Vagina (tissue), 2 donors: ENCODE measurements at regions of chr11 and their contacts with region 1.

Region 1: DNA sequence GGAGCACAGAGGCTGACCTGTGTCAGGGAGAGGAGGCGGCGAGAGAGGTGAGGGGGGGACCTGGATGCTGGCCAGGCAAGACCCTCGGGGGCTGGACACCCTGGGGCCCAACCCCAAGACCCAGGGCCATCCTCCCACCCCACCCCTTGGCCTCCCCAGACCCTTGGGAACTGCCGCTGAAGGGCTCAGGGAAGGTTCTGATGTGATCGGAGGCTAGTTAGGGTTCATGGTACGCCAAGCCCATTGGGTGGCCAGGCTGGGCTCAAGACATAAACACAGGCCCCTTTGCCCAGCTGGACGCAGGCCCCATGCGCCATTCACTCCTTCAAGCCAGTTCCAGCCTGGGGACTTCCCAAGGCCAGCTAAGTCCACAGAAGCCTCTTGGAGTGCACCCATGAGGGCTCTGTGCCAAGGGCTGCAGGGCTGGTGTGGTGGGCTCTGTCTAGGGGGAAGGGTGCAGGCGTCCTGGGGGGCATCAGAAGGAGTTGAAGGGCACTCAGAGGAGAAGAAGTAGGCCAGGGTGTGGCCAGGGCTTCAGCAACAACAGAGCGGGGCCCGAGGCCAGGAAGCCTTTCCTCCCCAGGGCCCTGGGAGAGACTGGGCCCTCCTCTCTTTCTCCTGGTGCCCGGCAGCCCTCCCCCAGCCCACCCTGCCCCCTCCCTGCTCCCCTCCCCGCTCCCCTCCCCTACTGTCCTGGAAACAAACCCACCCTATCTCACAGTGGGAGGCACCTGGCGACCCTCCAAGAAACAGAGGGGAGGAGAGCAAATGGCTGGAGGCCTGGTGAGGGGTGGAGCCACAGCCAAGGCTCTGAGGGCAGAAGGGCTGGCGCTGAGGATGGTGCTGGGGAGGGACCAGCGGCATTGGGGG is 12.9 kb downstream of the TSPAN32 start:
- DNase-seq: no peak
- H3K4me3 ChIP-seq: no peak overlapping the region
- H3K27ac ChIP-seq: peak overlapping the region; percentile 97
- H3K4me1 ChIP-seq: peaks cover 59% of the 10 kb centered on the region
- H3K27me3 ChIP-seq: no peaks in the 10 kb centered on the region
- CTCF ChIP-seq: no peak
- POLR2A ChIP-seq: no peak

Region 2: GRCh38 chr11:2377511-2378443 is 63.0 kb after region 1 on chr11:
- intact Hi-C with region 1: loop called (anchors 5 kb)
- DNase-seq: no peak
- H3K4me3 ChIP-seq: peak overlapping the region; percentile 87 to 90
- H3K27ac ChIP-seq: peak overlapping the region; percentile 98
- H3K4me1 ChIP-seq: peaks cover 56% of the 10 kb centered on the region
- H3K27me3 ChIP-seq: no peaks in the 10 kb centered on the region
- CTCF ChIP-seq: no peak
- POLR2A ChIP-seq: peak in 1 of 2 donors; percentile 44